ENCODE measurements at regions of chr22 and their contacts with region 1.

Region 1: GRCh38 chr22:41666661-41667258 is 21.9 kb downstream of the SNU13 start:
- DNase-seq: peak; percentile 72
- ATAC-seq: peak; percentile 96
- H3K4me3 ChIP-seq: peak overlapping the region; percentile 14; the same call in 1 of the 2 replicates
- H3K27ac ChIP-seq: peak overlapping the region; percentile 76
- H3K4me1 ChIP-seq: peaks cover 3% of the 10 kb centered on the region; the same call in 1 of the 2 replicates
- H3K27me3 ChIP-seq: no peaks in the 10 kb centered on the region
- CTCF ChIP-seq: peak; percentile 98 to 100 (median 100); a peak in 5 of 6 replicates
- EP300 ChIP-seq: no peak
- POLR2A ChIP-seq: peak; percentile 94
- RAD21 ChIP-seq: peak; percentile 66

Region 2: DNA sequence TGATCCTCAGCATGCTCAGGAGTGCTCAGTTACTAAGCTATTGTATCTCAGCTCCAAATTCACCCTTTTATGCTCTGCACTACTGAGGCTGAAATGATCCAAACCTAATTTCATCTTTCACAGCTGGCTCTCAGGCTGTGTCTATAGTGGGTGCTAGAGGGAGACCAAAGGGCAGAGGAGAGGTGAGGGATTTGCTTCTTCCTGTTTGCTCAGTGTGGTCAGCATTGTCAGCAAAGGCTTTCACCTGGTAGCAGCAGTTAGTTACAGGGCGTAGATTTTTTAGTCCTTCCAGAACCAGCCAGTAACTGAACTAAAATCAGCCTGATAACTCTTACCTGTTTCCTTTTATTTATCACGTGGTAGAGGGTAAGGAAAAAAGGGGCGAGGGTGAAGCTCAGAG is 12.4 kb before region 1 on chr22:
- CTCF ChIA-PET with region 1: interaction called, 24 read pairs
- POLR2A ChIA-PET with region 1: interaction called, 4 read pairs
- RAD21 ChIA-PET with region 1: interaction called, 3 read pairs
- SMC1A ChIA-PET with region 1: interaction called, 7 read pairs
- in situ Hi-C with region 1: no loop called
- intact Hi-C with region 1: no loop called
- DNase-seq: no peak
- ATAC-seq: no peak
- H3K4me3 ChIP-seq: no peak overlapping the region
- H3K27ac ChIP-seq: no peak overlapping the region
- H3K4me1 ChIP-seq: no peaks in the 10 kb centered on the region
- H3K27me3 ChIP-seq: no peaks in the 10 kb centered on the region
- CTCF ChIP-seq: no peak
- EP300 ChIP-seq: no peak
- POLR2A ChIP-seq: no peak
- RAD21 ChIP-seq: no peak

Region 3: GRCh38 chr22:41682033-41682807 is 15.5 kb after region 1 on chr22:
- CTCF ChIA-PET with region 1: interaction called, 21 read pairs
- POLR2A ChIA-PET with region 1: interaction called, 3 read pairs
- RAD21 ChIA-PET with region 1: interaction called, 4 read pairs
- SMC1A ChIA-PET with region 1: interaction called, 3 read pairs
- in situ Hi-C with region 1: no loop called
- intact Hi-C with region 1: no loop called
- DNase-seq: peak; percentile 66
- ATAC-seq: peak; percentile 90
- H3K4me3 ChIP-seq: peak overlapping the region; percentile 61
- H3K27ac ChIP-seq: peak overlapping the region; percentile 53
- H3K4me1 ChIP-seq: no peaks in the 10 kb centered on the region
- H3K27me3 ChIP-seq: no peaks in the 10 kb centered on the region
- CTCF ChIP-seq: no peak
- EP300 ChIP-seq: no peak
- POLR2A ChIP-seq: peak; percentile 86
- RAD21 ChIP-seq: no peak

Region 4: GRCh38 chr22:41688365-41689211 is 21.8 kb after region 1 on chr22 and contains the start of gene SNU13:
- CTCF ChIA-PET with region 1: interaction called, 16 read pairs
- POLR2A ChIA-PET with region 1: interaction called, 3 read pairs
- RAD21 ChIA-PET with region 1: interaction called, 4 read pairs
- SMC1A ChIA-PET with region 1: no interaction called
- in situ Hi-C with region 1: no loop called
- intact Hi-C with region 1: no loop called
- DNase-seq: peak; percentile 73
- ATAC-seq: peak; percentile 93
- H3K4me3 ChIP-seq: peak within 1 kb of the TSS; percentile 87
- H3K27ac ChIP-seq: peak within 1 kb of the TSS; percentile 98
- H3K4me1 ChIP-seq: peaks cover 3% of the 10 kb centered on the region; the same call in 1 of the 2 replicates
- H3K27me3 ChIP-seq: no peaks in the 10 kb centered on the region
- CTCF ChIP-seq: no peak
- EP300 ChIP-seq: peak in 1 of 2 experiments; percentile 36; a peak in 1 of 4 replicates
- POLR2A ChIP-seq: peak; percentile 90
- RAD21 ChIP-seq: no peak
- polyA plus RNA-seq, gene SNU13: 611 to 870 TPM

Measured in GM12878 (cell line).